ENCODE measurements at regions of chr6 and their contacts with region 1.

Region 1: GRCh38 chr6:71349395-71349794 is 60.8 kb downstream of the OGFRL1 start:
- DNase-seq: peak; percentile 9
- CTCF ChIP-seq: peak; percentile 54

Region 2: GRCh38 chr6:71181565-71181964 is 167.8 kb before region 1 on chr6:
- in situ Hi-C with region 1: loop called (anchors 10 kb)
- DNase-seq: no peak
- CTCF ChIP-seq: no peak

Region 3: DNA sequence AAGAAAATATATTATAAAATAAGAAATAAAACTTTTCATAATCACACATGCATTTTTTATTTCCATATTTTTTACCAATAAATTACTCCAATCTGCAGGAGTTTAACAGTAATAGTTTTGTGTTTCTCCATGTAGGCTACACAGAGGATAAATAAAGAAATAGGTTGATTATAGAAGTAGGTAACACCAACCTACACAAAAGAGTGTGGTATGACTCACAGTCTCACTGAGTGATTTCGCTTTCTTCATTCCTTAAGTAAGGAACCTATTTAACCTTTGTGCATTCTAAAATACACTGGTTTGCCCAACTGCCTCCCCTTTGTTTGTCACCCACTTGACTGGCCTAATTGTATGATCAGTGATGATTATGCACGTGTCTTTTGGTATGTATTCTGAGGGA is 292.7 kb after region 1 on chr6:
- in situ Hi-C with region 1: no loop called
- DNase-seq: no peak
- CTCF ChIP-seq: no peak

Measured in GM13977 (cell line).